ENCODE measurements at regions of chr7 and their contacts with region 1.

Region 1: GRCh38 chr7:77252506-77252905 is 52.9 kb upstream of the FGL2 start:
- DNase-seq: no peak
- H3K4me3 ChIP-seq: no peak overlapping the region
- CTCF ChIP-seq: no peak

Region 2: DNA sequence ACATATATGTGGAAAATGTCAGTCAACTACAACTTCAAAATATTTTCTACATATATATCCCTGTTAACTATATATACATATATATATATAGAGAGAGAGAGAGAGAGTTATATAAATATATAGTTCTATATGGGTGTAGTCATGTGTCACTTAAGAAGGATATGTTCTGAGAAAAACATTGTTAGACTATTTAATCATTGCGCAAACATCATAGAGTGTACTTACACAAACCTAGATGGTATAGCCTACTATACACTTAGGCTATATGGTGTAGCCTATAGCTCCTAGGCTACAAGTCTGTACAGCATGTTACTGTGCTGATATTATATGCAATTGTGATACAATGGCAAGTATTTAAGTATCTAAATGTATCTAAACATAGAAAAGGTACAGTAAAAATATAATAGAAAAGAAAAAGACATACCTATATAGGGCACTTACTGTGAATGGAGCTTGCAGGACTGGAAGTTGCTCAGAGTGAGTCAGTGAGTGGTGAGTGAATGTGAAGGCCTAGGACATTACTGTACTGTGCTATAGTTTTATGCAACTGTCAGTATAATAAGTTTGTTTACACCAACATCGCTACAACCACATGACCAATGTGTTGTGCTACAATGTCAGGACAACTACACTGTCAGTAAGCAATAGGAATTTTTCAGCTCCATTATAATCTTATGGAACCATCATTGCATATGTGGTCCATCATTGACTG is 34.9 kb before region 1 on chr7:
- in situ Hi-C with region 1: no loop called
- DNase-seq: no peak
- H3K4me3 ChIP-seq: no peak overlapping the region
- CTCF ChIP-seq: no peak

Region 3: GRCh38 chr7:77315182-77315591 is 62.7 kb after region 1 on chr7:
- in situ Hi-C with region 1: no loop called
- DNase-seq: no peak
- H3K4me3 ChIP-seq: no peak overlapping the region
- CTCF ChIP-seq: no peak

Region 4: GRCh38 chr7:77331938-77332695 is 79.6 kb after region 1 on chr7:
- in situ Hi-C with region 1: loop called (anchors 5 kb)
- DNase-seq: peak; percentile 82
- H3K4me3 ChIP-seq: no peak overlapping the region
- CTCF ChIP-seq: peak; percentile 61

Region 5: DNA sequence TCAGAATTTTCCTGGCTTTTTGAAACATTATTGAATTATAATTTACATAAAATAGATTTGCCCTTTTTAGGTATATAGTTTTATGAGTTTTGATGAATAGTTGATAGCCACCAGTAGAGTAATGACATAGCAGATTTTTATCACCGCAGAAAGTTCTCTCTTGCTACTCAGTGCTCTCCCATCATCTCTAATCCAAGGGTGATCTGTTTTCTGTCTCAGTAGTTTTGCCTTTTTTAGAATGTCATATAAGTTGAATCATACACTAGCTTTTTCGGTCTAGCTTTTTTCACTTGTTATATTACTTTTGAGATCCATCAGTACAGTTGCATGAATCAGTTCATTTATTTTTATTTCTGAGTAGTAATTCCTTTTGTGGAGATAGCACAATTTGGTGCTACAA is 461.7 kb after region 1 on chr7:
- in situ Hi-C with region 1: no loop called
- DNase-seq: no peak
- H3K4me3 ChIP-seq: no peak overlapping the region
- CTCF ChIP-seq: no peak

Region 6: GRCh38 chr7:77954773-77955555 is 702.5 kb after region 1 on chr7:
- in situ Hi-C with region 1: no loop called
- DNase-seq: no peak
- H3K4me3 ChIP-seq: no peak overlapping the region
- CTCF ChIP-seq: no peak

Measured in astrocyte of the cerebellum (primary cell).